ENCODE measurements at regions of chr14 and their contacts with region 1.

Region 1: GRCh38 chr14:105817971-105818711 is 291.8 kb downstream of the TMEM121 start:
- DNase-seq: peak; percentile 97
- ATAC-seq: peak; percentile 86
- H3K4me3 ChIP-seq: peak overlapping the region in 4 of 5 experiments; percentile 21 to 54 (median 30)
- H3K4me3 Mint-ChIP-seq: peak overlapping the region; percentile 76
- H3K27ac ChIP-seq: peak overlapping the region; percentile 99 to 100
- H3K27ac Mint-ChIP-seq: peak overlapping the region; percentile 96
- H3K4me1 ChIP-seq: peaks cover 56 to 58% of the 10 kb centered on the region in 2 donors
- H3K4me1 Mint-ChIP-seq: peaks cover 56% of the 10 kb centered on the region
- H3K27me3 ChIP-seq: no peaks in the 10 kb centered on the region
- H3K27me3 Mint-ChIP-seq: no peaks in the 10 kb centered on the region
- CTCF ChIP-seq: no peak

Region 2: DNA sequence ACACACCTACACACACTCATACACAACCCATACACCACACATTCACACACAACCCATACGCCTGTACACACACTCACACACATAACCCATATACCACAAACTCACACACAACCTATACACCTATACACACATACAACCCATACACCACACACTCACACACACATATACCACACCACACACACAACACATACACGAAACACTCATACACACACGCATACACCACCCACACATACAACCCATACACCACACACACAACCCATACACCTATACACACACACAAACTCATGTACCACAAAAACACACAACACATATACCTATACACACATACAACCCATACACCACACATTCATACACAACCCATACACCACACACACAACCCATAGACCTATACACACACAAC is 127.4 kb before region 1 on chr14:
- CTCF ChIA-PET with region 1: no interaction called
- POLR2A ChIA-PET with region 1: no interaction called
- intact Hi-C with region 1: loop called (anchors 10 kb)
- DNase-seq: peak; percentile 39
- ATAC-seq: no peak
- H3K4me3 ChIP-seq: peak overlapping the region in 1 of 5 experiments; percentile 36
- H3K4me3 Mint-ChIP-seq: peak overlapping the region; percentile 12
- H3K27ac ChIP-seq: peak overlapping the region; percentile 75 to 95
- H3K27ac Mint-ChIP-seq: peak overlapping the region; percentile 92
- H3K4me1 ChIP-seq: peaks cover 69 to 81% of the 10 kb centered on the region in 2 donors
- H3K4me1 Mint-ChIP-seq: peaks cover 66% of the 10 kb centered on the region
- H3K27me3 ChIP-seq: no peaks in the 10 kb centered on the region
- H3K27me3 Mint-ChIP-seq: no peaks in the 10 kb centered on the region
- CTCF ChIP-seq: no peak

Region 3: DNA sequence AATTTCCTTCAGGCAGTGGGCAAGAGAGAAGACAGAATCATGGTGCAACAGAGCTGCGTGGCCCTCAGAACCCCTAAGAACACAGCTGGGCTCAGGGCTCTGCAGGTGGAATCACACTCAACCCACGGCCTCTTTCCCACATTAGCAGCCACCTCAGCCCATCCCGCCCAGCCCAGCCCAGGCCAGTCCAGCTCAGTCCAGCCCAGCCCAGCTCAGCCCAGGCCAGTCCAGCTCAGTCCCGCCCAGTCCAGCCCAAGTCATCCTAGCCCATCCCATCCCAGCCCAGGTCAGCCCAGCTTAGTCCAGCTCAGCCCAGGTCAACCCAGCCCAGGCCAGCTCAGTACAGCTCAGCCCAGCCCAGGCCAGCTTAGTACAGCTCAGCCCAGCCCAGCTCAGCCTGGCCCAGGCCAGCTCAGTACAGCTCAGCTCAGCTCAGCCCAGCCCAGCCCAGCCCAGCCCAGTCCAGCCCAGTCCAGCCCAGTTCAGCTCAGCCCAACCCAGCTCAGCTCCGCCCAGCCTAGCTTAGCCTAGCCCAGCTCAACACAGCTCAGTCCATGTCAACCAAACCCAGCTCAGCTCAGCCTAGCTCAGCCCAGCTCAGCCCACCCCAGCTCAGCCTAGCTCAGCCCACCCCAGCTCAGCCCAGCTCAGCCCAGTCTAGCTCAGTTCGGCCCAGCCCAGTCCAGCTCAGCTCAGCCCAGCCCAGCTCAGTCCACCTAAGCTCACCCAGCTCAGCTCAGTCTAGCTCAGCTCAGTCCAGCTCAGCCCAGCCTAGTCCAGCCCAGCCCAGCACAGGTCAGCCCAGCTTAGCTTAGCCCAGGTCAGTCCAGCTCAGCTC is 108.6 kb before region 1 on chr14:
- CTCF ChIA-PET with region 1: interaction called, 3 read pairs
- POLR2A ChIA-PET with region 1: interaction called, 11 read pairs
- intact Hi-C with region 1: no loop called
- DNase-seq: peak; percentile 22
- ATAC-seq: no peak
- H3K4me3 ChIP-seq: peak overlapping the region in 4 of 5 experiments; percentile 45 to 61 (median 52)
- H3K4me3 Mint-ChIP-seq: peak overlapping the region; percentile 82
- H3K27ac ChIP-seq: peak overlapping the region; percentile 80 to 90
- H3K27ac Mint-ChIP-seq: peak overlapping the region; percentile 88
- H3K4me1 ChIP-seq: peaks cover 31 to 69% of the 10 kb centered on the region in 2 donors
- H3K4me1 Mint-ChIP-seq: peaks cover 45% of the 10 kb centered on the region
- H3K27me3 ChIP-seq: no peaks in the 10 kb centered on the region
- H3K27me3 Mint-ChIP-seq: no peaks in the 10 kb centered on the region
- CTCF ChIP-seq: no peak

Region 4: GRCh38 chr14:105748194-105748578 is 70.0 kb before region 1 on chr14:
- CTCF ChIA-PET with region 1: no interaction called
- POLR2A ChIA-PET with region 1: interaction called, 11 read pairs
- intact Hi-C with region 1: no loop called
- DNase-seq: no peak
- ATAC-seq: peak; percentile 66
- H3K4me3 ChIP-seq: peak overlapping the region in 4 of 5 experiments; percentile 33 to 56 (median 52)
- H3K4me3 Mint-ChIP-seq: peak overlapping the region; percentile 95
- H3K27ac ChIP-seq: peak overlapping the region in 1 of 2 donors; percentile 49
- H3K27ac Mint-ChIP-seq: peak overlapping the region; percentile 97
- H3K4me1 ChIP-seq: peaks cover 34 to 41% of the 10 kb centered on the region in 2 donors
- H3K4me1 Mint-ChIP-seq: peaks cover 23% of the 10 kb centered on the region
- H3K27me3 ChIP-seq: no peaks in the 10 kb centered on the region
- H3K27me3 Mint-ChIP-seq: no peaks in the 10 kb centered on the region
- CTCF ChIP-seq: no peak

Region 5: GRCh38 chr14:105773995-105774394 is 44.1 kb before region 1 on chr14:
- CTCF ChIA-PET with region 1: interaction called, 3 read pairs
- POLR2A ChIA-PET with region 1: interaction called, 28 read pairs
- intact Hi-C with region 1: loop called (anchors 5 kb)
- DNase-seq: peak; percentile 42
- ATAC-seq: no peak
- H3K4me3 ChIP-seq: peak overlapping the region in 4 of 5 experiments; percentile 47 to 74 (median 62)
- H3K4me3 Mint-ChIP-seq: peak overlapping the region; percentile 97
- H3K27ac ChIP-seq: peak overlapping the region; percentile 54 to 65
- H3K27ac Mint-ChIP-seq: peak overlapping the region; percentile 98
- H3K4me1 ChIP-seq: peaks cover 26 to 43% of the 10 kb centered on the region in 2 donors
- H3K4me1 Mint-ChIP-seq: peaks cover 60% of the 10 kb centered on the region
- H3K27me3 ChIP-seq: no peaks in the 10 kb centered on the region
- H3K27me3 Mint-ChIP-seq: no peaks in the 10 kb centered on the region
- CTCF ChIP-seq: no peak

Region 6: GRCh38 chr14:105853089-105853906 is 35.2 kb after region 1 on chr14:
- CTCF ChIA-PET with region 1: interaction called, 10 read pairs
- POLR2A ChIA-PET with region 1: interaction called, 42 read pairs
- intact Hi-C with region 1: loop called (anchors 1 kb)
- DNase-seq: peak; percentile 41
- ATAC-seq: peak; percentile 1
- H3K4me3 ChIP-seq: peak overlapping the region in 1 of 5 experiments; percentile 15
- H3K4me3 Mint-ChIP-seq: peak overlapping the region; percentile 98
- H3K27ac ChIP-seq: peak overlapping the region; percentile 57 to 94
- H3K27ac Mint-ChIP-seq: peak overlapping the region; percentile 98
- H3K4me1 ChIP-seq: peaks cover 8 to 51% of the 10 kb centered on the region in 2 donors
- H3K4me1 Mint-ChIP-seq: peaks cover 52% of the 10 kb centered on the region
- H3K27me3 ChIP-seq: no peaks in the 10 kb centered on the region
- H3K27me3 Mint-ChIP-seq: no peaks in the 10 kb centered on the region
- CTCF ChIP-seq: no peak

Region 7: GRCh38 chr14:106013879-106014376 is 195.8 kb after region 1 on chr14:
- CTCF ChIA-PET with region 1: no interaction called
- POLR2A ChIA-PET with region 1: no interaction called
- intact Hi-C with region 1: no loop called
- DNase-seq: no peak
- ATAC-seq: no peak
- H3K4me3 ChIP-seq: no peak overlapping the region
- H3K4me3 Mint-ChIP-seq: no peak overlapping the region
- H3K27ac ChIP-seq: no peak overlapping the region
- H3K27ac Mint-ChIP-seq: no peak overlapping the region
- H3K4me1 ChIP-seq: peaks cover 0 to 4% of the 10 kb centered on the region in 2 donors
- H3K4me1 Mint-ChIP-seq: peaks cover 3% of the 10 kb centered on the region
- H3K27me3 ChIP-seq: no peaks in the 10 kb centered on the region
- H3K27me3 Mint-ChIP-seq: no peaks in the 10 kb centered on the region
- CTCF ChIP-seq: no peak